Activated B cell treated with CpG ODN at 0.5 μM for 24 hours (primary cell): ENCODE measurements at regions of chr5 and their contacts with region 1.

Region 1: DNA sequence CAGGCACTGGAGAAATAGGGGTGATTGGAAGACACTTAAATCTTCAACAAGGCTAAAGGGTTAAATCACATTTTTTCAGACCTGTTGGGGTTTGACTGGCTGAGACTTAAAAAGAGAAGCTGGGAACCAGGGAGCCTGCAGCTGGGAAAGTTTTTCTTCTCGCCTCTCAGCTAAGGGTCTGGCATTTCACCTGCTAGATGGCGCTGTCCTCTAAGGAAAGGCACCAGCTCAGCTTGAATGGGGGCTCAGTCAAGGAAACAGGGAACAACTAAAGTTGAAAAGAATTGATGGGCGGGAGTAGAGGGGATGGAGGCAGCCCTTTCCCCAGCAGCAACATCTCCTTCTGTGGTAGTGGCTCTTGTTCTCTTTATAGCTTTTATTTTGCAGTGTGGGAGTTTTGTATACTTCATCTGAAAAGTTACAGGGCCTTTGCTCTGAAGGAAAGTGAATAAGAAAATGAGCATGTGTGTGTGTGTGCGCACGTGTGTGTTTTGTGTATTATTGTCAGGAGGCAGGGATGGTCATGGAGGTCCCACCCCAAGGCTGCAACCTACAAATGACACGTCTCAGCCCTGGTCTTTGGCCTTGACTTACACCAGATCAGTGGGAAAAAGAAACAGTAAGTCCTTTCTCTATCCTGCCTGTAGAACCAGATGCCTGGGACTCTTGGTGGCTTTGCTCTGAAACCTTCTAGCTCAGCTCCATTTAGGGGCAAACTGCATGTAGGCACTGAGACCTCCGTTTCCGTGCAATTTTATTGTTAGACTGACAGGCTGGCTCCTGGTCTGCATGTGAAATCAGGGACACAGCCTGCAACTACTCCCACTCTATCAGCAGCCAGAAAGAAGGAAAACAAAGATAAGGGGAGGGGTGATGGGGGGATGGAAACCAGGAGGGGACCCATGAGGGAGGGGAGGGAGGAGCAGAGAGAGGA is 316.2 kb upstream of the CLINT1 start:
- DNase-seq: peak; percentile 48
- ATAC-seq: peak; percentile 82
- H3K4me3 Mint-ChIP-seq: no peak overlapping the region
- H3K27ac Mint-ChIP-seq: no peak overlapping the region
- H3K4me1 Mint-ChIP-seq: peaks cover 33% of the 10 kb centered on the region
- H3K27me3 Mint-ChIP-seq: no peaks in the 10 kb centered on the region
- CTCF ChIP-seq: peak; percentile 76

Region 2: DNA sequence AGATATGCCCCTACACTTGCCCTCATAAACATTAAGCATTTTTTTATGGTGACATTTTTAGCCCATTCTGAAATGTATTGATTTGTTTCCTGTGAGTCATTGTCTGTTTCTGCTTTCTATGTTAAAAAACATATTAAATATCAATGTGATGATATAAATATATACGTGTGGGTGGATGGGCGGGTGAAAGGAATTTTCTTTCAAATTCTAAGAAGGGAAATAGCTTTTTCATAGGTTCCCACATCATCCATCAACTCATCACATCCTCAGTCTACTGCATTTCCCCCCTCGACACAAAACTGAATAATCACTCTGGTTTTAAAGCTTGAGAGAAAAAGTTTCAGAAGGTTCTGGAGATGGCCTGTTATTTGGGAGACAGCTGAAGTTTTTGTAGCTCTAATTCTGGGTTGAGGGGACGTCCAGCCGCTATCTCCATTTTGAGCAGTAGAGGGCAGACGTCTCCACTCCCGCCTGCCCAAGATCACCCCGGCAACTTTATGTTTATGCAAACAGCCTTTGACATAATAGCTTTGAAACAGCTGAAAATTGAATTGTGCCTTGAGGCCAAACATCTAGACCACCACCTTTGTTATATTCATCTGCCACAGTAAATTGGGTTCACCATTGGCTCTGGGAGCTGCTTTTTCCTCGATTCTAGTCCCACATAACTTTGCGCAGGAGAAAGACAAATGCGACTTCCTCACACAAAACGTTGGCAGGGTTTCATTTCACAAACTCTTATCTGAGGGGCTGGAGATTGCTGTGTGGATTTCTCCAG is 100.0 kb before region 1 on chr5:
- CTCF ChIA-PET with region 1: interaction called, 18 read pairs
- POLR2A ChIA-PET with region 1: no interaction called
- intact Hi-C with region 1: loop called (anchors 1 kb)
- DNase-seq: peak; percentile 48
- ATAC-seq: peak; percentile 95
- H3K4me3 Mint-ChIP-seq: peak overlapping the region; percentile 42
- H3K27ac Mint-ChIP-seq: peak overlapping the region; percentile 73
- H3K4me1 Mint-ChIP-seq: peaks cover 20% of the 10 kb centered on the region
- H3K27me3 Mint-ChIP-seq: peaks cover 2% of the 10 kb centered on the region
- CTCF ChIP-seq: no peak

Region 3: GRCh38 chr5:158676642-158677469 is 501.7 kb after region 1 on chr5:
- CTCF ChIA-PET with region 1: interaction called, 6 read pairs
- POLR2A ChIA-PET with region 1: no interaction called
- intact Hi-C with region 1: loop called (anchors 5 kb)
- DNase-seq: no peak
- ATAC-seq: peak; percentile 83
- H3K4me3 Mint-ChIP-seq: peak overlapping the region; percentile 74
- H3K27ac Mint-ChIP-seq: peak overlapping the region; percentile 92
- H3K4me1 Mint-ChIP-seq: peaks cover 28% of the 10 kb centered on the region
- H3K27me3 Mint-ChIP-seq: no peaks in the 10 kb centered on the region
- CTCF ChIP-seq: no peak

Region 4: DNA sequence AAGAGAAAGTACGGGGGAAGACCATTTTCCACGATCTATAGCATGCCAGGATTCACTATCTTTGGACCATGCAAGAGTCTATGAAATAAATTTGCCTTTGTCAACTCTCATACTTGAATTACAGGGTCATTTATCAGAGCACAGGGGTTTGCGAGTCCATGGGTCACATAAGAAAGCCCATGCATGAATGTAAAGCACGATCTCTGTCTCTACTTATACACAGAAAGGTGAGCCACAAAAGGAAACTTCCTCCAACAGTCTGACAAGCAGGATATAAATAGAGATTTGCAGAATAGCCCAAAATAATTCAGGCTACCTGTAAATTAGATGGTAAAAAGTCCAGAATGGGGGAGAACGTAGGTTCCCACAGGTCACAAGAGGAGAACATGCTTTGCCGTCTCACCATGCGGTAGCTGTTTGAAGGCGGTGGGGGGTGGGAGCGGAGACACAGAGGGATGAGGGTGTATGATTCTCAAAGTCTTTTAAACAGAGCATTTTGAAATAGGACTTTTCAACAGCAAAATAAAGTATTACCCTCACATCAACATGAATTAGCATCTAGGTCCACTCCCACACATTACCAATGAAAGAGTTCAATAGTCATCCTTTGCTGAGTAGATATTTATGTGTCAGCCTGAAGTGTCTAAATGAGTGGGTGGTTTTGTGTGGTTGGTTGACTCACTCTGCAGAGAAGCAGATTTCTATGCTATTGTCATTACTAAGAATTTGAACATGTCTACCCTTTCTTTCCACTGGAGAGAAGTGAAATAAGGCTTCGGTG is 644.8 kb after region 1 on chr5:
- CTCF ChIA-PET with region 1: no interaction called
- POLR2A ChIA-PET with region 1: no interaction called
- intact Hi-C with region 1: loop called (anchors 10 kb)
- DNase-seq: no peak
- ATAC-seq: peak; percentile 76
- H3K4me3 Mint-ChIP-seq: peak overlapping the region; percentile 75
- H3K27ac Mint-ChIP-seq: peak overlapping the region; percentile 95
- H3K4me1 Mint-ChIP-seq: peaks cover 99% of the 10 kb centered on the region
- H3K27me3 Mint-ChIP-seq: no peaks in the 10 kb centered on the region
- CTCF ChIP-seq: no peak

Region 5: DNA sequence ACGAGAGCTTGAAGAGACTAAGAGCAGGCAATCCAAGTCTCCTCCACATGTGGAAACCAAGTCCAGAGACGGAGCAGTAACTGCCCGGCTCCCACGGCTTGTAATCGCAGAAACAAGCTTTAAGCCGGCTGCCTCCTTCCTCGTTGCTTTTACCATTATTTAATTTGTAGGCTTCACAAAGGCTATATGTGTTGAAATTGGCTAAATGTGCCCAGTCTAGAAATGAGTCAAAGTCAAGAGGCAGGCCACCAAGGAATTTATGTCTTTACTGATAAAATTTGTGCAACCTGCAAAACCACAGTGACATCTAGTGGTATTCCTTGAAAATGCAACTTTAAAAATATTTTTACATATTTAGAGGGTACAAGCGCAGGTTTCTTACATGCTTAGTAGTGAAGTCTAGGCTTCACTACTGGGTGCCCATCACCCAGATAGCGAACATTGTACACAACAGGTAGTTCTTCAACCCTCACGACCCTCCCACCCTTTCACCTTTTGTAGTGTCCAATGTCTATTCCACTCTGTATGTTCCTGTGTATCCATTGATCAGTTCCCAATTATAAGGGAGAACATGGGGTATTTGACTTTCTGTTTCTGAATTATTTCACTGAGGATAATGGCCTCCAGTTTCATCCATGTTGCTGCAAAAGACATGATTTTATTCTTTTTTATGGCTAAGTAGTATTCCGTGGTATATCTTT is 958.0 kb after region 1 on chr5:
- CTCF ChIA-PET with region 1: interaction called, 27 read pairs
- POLR2A ChIA-PET with region 1: interaction called, 3 read pairs
- intact Hi-C with region 1: loop called (anchors 1 kb)
- DNase-seq: no peak
- ATAC-seq: peak; percentile 50
- H3K4me3 Mint-ChIP-seq: no peak overlapping the region
- H3K27ac Mint-ChIP-seq: no peak overlapping the region
- H3K4me1 Mint-ChIP-seq: no peaks in the 10 kb centered on the region
- H3K27me3 Mint-ChIP-seq: no peaks in the 10 kb centered on the region
- CTCF ChIP-seq: peak; percentile 82